PC-3 (cell line): ENCODE measurements at regions of chr7 and their contacts with region 1.

Region 1: GRCh38 chr7:128827248-128827958 is 2.8 kb upstream of the FLNC start:
- DNase-seq: peak; percentile 78
- ATAC-seq: peak; percentile 66
- H3K4me3 ChIP-seq: no peak overlapping the region
- H3K27ac ChIP-seq: peak overlapping the region; percentile 85
- H3K4me1 ChIP-seq: peaks cover 46% of the 10 kb centered on the region
- H3K27me3 ChIP-seq: no peaks in the 10 kb centered on the region
- CTCF ChIP-seq: no peak

Region 2: GRCh38 chr7:128591705-128592104 is 235.7 kb before region 1 on chr7:
- CTCF ChIA-PET with region 1: no interaction called
- POLR2A ChIA-PET with region 1: no interaction called
- intact Hi-C with region 1: no loop called
- DNase-seq: no peak
- ATAC-seq: no peak
- H3K4me3 ChIP-seq: no peak overlapping the region
- H3K27ac ChIP-seq: no peak overlapping the region
- H3K4me1 ChIP-seq: no peaks in the 10 kb centered on the region
- H3K27me3 ChIP-seq: no peaks in the 10 kb centered on the region
- CTCF ChIP-seq: no peak

Region 3: GRCh38 chr7:128849804-128850490 is 22.5 kb after region 1 on chr7:
- CTCF ChIA-PET with region 1: no interaction called
- POLR2A ChIA-PET with region 1: interaction called, 11 read pairs
- intact Hi-C with region 1: no loop called
- DNase-seq: no peak
- ATAC-seq: no peak
- H3K4me3 ChIP-seq: no peak overlapping the region
- H3K27ac ChIP-seq: no peak overlapping the region
- H3K4me1 ChIP-seq: no peaks in the 10 kb centered on the region
- H3K27me3 ChIP-seq: no peaks in the 10 kb centered on the region
- CTCF ChIP-seq: no peak